Mammary epithelial cell (primary cell): ENCODE measurements at regions of chr9 and their contacts with region 1.

Region 1: DNA sequence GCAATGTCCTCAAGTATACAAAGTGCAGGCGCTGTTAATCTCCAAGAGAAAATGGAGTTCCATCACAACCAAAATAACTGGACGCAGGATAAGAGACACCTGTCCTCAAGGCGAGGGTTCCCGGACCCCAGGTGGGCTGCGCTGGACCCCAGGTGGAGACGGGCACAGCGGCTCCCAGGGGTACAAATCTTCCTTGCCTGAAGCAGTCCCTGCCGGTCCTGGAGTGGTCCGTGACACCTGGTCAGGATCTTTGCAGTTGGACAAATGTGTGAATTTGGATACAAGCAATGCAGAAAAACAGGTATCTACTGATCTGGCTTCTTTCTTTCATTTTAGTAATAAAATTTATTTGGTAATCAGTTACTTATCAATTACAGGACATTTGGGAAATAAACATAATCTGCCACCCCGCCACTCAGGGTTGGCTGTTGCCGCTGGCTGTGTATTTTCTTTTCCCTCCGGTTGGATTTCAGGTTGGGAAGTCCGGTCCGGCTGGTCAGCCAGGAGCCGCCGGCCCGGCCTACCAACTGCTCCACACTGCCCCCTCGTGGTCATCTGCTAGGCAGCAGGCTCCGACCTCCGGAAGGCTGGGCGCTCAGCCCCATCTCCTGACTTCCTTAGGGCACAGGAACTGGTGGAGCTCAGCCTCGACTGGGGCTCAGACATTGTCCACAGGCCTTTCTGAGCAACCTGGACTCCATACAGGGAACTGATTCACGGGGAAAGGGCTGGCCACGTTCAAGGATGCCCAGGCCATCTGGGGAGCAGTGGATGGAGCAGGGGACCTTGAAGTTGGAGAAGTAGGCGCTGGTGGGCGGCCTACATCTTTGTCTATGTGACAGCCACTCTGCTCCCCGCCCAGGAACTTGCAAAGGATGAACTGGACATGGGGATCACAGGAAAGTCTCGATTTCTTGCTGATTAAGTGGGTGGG is 43.4 kb downstream of the NXNL2 start:
- DNase-seq: peak; percentile 66
- H3K4me3 ChIP-seq: peak overlapping the region in 1 of 3 experiments; percentile 29
- H3K27ac ChIP-seq: no peak overlapping the region
- H3K4me1 ChIP-seq: peaks cover under 1% of the 10 kb centered on the region
- H3K27me3 ChIP-seq: no peaks in the 10 kb centered on the region
- CTCF ChIP-seq: peak; percentile 78 to 94

Region 2: DNA sequence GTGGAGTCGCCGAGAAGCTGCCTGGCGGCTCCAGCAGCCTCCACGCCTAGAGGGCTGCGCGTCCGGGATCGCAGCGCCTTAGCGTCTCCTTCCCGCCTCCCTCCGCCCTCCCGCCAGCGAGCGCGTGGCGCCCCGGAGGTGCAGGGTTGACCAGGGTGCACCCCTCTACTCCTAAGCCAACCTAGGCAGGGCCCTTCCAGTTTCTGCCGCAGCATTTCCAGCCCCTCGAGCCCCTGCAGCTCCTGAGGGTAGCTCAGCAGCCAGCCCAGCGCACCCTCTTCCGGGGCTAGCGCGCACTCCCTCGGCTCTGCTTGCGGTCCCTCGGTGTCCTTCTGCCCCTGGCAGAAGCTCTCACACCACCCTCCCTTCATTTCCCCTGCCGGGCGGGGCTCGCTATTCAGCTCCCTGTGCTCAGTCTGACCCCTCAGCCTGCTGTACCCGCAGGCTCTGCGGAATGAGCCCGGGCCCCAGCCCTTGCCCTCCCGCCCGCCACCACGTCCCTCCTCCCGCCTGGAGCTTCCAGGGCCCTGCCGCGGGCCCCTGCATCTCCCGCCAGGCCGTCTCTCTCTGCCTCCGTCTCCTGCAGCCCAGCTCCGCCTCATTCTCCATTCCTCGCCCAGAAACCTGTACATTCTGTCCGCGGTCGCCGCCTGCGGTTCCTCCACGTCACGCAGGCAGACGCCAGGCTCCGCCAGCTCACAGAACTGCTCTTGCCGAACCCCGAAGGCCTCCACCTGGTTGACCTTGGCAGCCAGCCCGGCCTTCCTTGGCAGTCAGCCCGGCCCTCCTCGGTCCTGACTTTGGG is 501.9 kb before region 1 on chr9:
- CTCF ChIA-PET with region 1: interaction called, 13 read pairs
- dilution Hi-C with region 1: no loop called
- in situ Hi-C with region 1: no loop called
- intact Hi-C with region 1: no loop called
- DNase-seq: peak; percentile 95
- H3K4me3 ChIP-seq: peak overlapping the region; percentile 48 to 70 (median 58)
- H3K27ac ChIP-seq: peak overlapping the region; percentile 85
- H3K4me1 ChIP-seq: peaks cover 14% of the 10 kb centered on the region
- H3K27me3 ChIP-seq: no peaks in the 10 kb centered on the region
- CTCF ChIP-seq: peak in 1 of 2 donors; percentile 43

Region 3: GRCh38 chr9:88173378-88173999 is 404.9 kb before region 1 on chr9:
- CTCF ChIA-PET with region 1: no interaction called
- dilution Hi-C with region 1: no loop called
- in situ Hi-C with region 1: loop called in 1 of 2 experiments (anchors 10 kb)
- intact Hi-C with region 1: loop called (anchors 1 kb)
- DNase-seq: peak; percentile 67
- H3K4me3 ChIP-seq: no peak overlapping the region
- H3K27ac ChIP-seq: no peak overlapping the region
- H3K4me1 ChIP-seq: no peaks in the 10 kb centered on the region
- H3K27me3 ChIP-seq: no peaks in the 10 kb centered on the region
- CTCF ChIP-seq: peak; percentile 80 to 84

Region 4: DNA sequence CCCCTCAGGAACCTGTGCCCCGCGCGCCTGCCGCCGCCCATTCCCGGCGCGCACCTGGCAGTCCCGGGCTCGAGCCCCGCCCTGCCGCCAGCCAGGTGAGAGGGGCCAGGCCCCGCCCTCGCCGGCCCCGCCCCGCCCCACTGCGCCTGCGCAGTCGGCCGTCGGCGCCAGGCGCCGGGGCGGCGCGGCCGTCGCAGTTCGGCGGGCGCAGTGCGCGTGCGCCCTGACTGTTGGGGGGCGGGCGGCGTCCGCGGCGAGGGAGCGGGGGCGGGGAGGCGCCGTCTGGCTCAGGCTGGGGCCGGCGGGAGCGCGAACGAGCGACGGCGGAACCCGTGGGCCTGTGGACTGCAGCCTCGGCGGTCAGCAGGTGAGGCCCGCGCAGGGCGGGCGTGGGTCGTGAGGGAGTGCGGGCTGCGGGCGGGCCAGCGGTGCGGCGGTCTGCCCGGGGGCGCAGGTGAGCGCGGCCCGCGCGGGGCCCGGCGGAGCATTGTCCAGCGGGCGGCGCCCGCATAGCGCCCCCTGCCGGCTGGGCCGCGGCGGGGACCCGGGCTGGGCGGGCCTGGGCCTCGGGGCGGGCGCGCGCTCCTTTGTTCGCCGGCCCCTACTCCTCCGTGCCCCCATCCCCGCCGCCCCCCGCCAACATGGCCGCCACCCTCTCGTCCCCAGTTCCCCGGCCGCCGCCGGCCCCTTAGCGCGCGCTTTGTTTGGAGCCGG is 190.1 kb before region 1 on chr9 and contains the start of gene SPIN1:
- CTCF ChIA-PET with region 1: no interaction called
- dilution Hi-C with region 1: no loop called
- in situ Hi-C with region 1: no loop called
- intact Hi-C with region 1: loop called (anchors 1 kb)
- DNase-seq: no peak
- H3K4me3 ChIP-seq: peak within 1 kb of the TSS; percentile 64 to 93 (median 77)
- H3K27ac ChIP-seq: peak within 1 kb of the TSS; percentile 91
- H3K4me1 ChIP-seq: peaks cover 18% of the 10 kb centered on the region
- H3K27me3 ChIP-seq: no peaks in the 10 kb centered on the region
- CTCF ChIP-seq: peak; percentile 28 to 35
- total RNA-seq, gene SPIN1: 86.7 to 98.2 TPM

Region 5: DNA sequence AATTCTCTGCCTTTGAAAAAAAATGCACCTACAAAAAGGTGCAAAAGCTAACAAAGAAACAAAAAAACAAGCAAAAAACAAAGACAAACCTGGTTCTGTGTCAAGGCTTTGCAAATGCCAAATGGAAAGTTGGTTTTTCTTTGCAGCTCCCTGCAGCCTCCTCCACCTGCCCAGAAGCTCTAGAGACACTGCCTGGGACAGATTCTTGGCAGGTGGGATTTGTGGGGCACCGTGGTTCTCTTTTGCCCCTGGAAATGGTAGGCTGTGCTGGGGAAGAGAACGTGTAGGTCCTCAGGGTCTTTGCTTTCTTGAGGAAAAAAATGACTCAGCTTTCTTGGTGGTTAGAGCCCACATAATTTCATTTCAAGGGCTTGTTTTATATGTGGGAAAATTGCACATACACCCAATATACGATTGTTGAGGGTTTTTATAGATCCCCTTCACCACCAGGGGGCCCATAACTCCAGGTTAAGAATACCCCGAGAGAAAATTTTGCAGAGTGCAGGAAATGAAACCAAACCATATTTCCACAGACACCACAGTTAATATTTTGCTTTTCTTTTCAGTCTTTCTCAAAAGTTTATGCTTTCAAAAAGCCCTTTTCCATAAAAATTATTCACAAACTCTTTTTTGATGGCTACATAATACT is 15.3 kb after region 1 on chr9:
- CTCF ChIA-PET with region 1: interaction called, 15 read pairs
- dilution Hi-C with region 1: no loop called
- in situ Hi-C with region 1: no loop called
- intact Hi-C with region 1: no loop called
- DNase-seq: peak; percentile 28
- H3K4me3 ChIP-seq: no peak overlapping the region
- H3K27ac ChIP-seq: no peak overlapping the region
- H3K4me1 ChIP-seq: no peaks in the 10 kb centered on the region
- H3K27me3 ChIP-seq: peaks cover 4% of the 10 kb centered on the region
- CTCF ChIP-seq: peak; percentile 58 to 64